ENCODE measurements at regions of chr6 and their contacts with region 1.

Region 1: GRCh38 chr6:26285143-26286134 is 79.6 kb upstream of the BTN3A2 start:
- DNase-seq: peak; percentile 99
- ATAC-seq: peak; percentile 79
- H3K4me3 Mint-ChIP-seq: peak overlapping the region; percentile 88
- H3K27ac Mint-ChIP-seq: peak overlapping the region; percentile 100
- H3K4me1 Mint-ChIP-seq: peaks cover 15% of the 10 kb centered on the region
- H3K27me3 Mint-ChIP-seq: peaks cover 2% of the 10 kb centered on the region
- CTCF ChIP-seq: no peak

Region 2: GRCh38 chr6:26183581-26184366 is 101.7 kb before region 1 on chr6:
- CTCF ChIA-PET with region 1: no interaction called
- POLR2A ChIA-PET with region 1: interaction called, 13 read pairs
- intact Hi-C with region 1: no loop called
- DNase-seq: peak; percentile 72
- ATAC-seq: peak; percentile 82
- H3K4me3 Mint-ChIP-seq: peak overlapping the region; percentile 76
- H3K27ac Mint-ChIP-seq: peak overlapping the region; percentile 84
- H3K4me1 Mint-ChIP-seq: peaks cover 38% of the 10 kb centered on the region
- H3K27me3 Mint-ChIP-seq: no peaks in the 10 kb centered on the region
- CTCF ChIP-seq: no peak

Region 3: GRCh38 chr6:26240154-26241032 is 45.0 kb before region 1 on chr6:
- CTCF ChIA-PET with region 1: no interaction called
- POLR2A ChIA-PET with region 1: interaction called, 62 read pairs
- intact Hi-C with region 1: no loop called
- DNase-seq: peak; percentile 88
- ATAC-seq: peak; percentile 82
- H3K4me3 Mint-ChIP-seq: peak overlapping the region; percentile 77
- H3K27ac Mint-ChIP-seq: peak overlapping the region; percentile 92
- H3K4me1 Mint-ChIP-seq: peaks cover 32% of the 10 kb centered on the region
- H3K27me3 Mint-ChIP-seq: no peaks in the 10 kb centered on the region
- CTCF ChIP-seq: no peak

Region 4: DNA sequence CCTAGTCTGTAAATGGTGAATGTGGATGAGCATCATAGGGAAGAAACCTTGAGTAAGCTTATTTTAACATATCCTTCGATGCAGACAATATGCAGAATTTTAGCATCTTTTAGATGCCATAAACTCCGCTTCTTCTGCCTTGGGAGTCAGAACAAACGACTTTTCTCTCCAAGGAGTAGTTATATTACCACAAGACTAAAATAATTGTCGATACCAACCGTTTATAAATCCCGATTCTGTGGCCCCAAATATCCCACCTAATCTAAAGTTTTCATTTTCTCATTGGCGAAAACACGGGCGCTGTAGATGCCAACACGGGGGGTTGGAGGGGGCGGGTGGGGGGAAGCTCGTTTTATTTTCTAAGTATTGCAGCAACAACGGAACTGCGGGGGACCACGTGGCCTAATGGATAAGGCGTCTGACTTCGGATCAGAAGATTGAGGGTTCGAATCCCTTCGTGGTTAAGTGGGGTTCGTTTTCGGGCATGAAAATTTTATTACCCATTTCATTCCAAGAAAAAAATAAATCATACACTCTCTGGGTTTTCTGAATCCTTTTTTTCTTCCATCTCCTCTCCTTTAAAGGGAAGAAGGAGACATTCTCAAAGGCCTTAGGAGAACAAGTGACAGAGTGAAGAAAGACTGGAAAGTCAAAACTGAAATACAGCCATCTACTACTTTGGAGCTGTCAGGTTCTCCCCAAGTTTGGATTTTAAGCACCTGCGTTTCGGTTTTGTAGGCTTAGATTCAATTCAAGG is 14.0 kb after region 1 on chr6:
- CTCF ChIA-PET with region 1: no interaction called
- POLR2A ChIA-PET with region 1: interaction called, 23 read pairs
- intact Hi-C with region 1: no loop called
- DNase-seq: no peak
- ATAC-seq: no peak
- H3K4me3 Mint-ChIP-seq: no peak overlapping the region
- H3K27ac Mint-ChIP-seq: no peak overlapping the region
- H3K4me1 Mint-ChIP-seq: peaks cover 39% of the 10 kb centered on the region
- H3K27me3 Mint-ChIP-seq: peaks cover 2% of the 10 kb centered on the region
- CTCF ChIP-seq: no peak

Region 5: DNA sequence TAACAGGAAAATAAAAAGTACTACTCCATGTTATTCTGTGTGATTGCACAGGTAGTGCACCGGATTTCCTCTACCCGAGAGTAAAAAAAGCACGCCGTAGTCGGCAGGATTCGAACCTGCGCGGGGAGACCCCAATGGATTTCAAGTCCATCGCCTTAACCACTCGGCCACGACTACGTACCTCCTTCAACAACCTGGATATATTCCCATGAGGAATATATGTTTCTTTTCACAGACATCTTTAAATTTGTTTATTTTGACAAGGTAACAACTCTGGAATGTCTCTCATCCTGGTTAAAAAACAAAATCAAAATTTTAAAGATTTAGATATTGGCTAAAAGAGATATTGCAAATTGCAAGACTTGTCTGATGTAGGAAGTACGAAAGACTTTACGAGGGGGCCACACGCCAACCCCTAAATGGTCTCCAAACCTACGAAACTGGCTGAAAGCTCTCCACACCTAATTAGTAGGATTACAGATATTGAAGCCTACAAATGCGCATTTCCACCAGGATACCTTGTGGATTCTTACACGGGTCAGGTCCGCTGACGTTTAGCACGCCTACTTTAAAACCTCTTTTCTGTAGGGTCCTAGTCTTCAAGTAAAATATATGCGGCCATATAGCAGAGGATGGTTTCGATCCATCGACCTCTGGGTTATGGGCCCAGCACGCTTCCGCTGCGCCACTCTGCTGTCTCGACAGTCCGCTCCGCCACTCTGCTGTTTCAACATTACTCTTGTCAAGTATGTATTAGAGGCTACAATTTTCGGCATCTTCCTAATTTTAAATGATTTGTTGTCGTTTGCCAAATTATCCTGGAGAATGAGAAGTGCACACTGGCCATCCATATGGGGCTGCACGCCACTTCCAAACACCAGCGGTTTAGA is 27.3 kb after region 1 on chr6:
- CTCF ChIA-PET with region 1: interaction called, 5 read pairs
- POLR2A ChIA-PET with region 1: interaction called, 18 read pairs
- intact Hi-C with region 1: loop called (anchors 2 kb)
- DNase-seq: peak; percentile 92
- ATAC-seq: peak; percentile 74
- H3K4me3 Mint-ChIP-seq: peak overlapping the region; percentile 84
- H3K27ac Mint-ChIP-seq: peak overlapping the region; percentile 93
- H3K4me1 Mint-ChIP-seq: peaks cover 33% of the 10 kb centered on the region
- H3K27me3 Mint-ChIP-seq: no peaks in the 10 kb centered on the region
- CTCF ChIP-seq: no peak

Region 6: GRCh38 chr6:26421259-26422144 is 136.1 kb after region 1 on chr6:
- CTCF ChIA-PET with region 1: no interaction called
- POLR2A ChIA-PET with region 1: no interaction called
- intact Hi-C with region 1: no loop called
- DNase-seq: peak; percentile 67
- ATAC-seq: peak; percentile 95
- H3K4me3 Mint-ChIP-seq: no peak overlapping the region
- H3K27ac Mint-ChIP-seq: no peak overlapping the region
- H3K4me1 Mint-ChIP-seq: peaks cover 8% of the 10 kb centered on the region
- H3K27me3 Mint-ChIP-seq: no peaks in the 10 kb centered on the region
- CTCF ChIP-seq: no peak

Region 7: GRCh38 chr6:26431258-26432172 is 146.1 kb after region 1 on chr6:
- CTCF ChIA-PET with region 1: no interaction called
- POLR2A ChIA-PET with region 1: no interaction called
- intact Hi-C with region 1: no loop called
- DNase-seq: no peak
- ATAC-seq: no peak
- H3K4me3 Mint-ChIP-seq: no peak overlapping the region
- H3K27ac Mint-ChIP-seq: no peak overlapping the region
- H3K4me1 Mint-ChIP-seq: no peaks in the 10 kb centered on the region
- H3K27me3 Mint-ChIP-seq: no peaks in the 10 kb centered on the region
- CTCF ChIP-seq: no peak